ENCODE measurements at regions of chr3 and their contacts with region 1.

Region 1: DNA sequence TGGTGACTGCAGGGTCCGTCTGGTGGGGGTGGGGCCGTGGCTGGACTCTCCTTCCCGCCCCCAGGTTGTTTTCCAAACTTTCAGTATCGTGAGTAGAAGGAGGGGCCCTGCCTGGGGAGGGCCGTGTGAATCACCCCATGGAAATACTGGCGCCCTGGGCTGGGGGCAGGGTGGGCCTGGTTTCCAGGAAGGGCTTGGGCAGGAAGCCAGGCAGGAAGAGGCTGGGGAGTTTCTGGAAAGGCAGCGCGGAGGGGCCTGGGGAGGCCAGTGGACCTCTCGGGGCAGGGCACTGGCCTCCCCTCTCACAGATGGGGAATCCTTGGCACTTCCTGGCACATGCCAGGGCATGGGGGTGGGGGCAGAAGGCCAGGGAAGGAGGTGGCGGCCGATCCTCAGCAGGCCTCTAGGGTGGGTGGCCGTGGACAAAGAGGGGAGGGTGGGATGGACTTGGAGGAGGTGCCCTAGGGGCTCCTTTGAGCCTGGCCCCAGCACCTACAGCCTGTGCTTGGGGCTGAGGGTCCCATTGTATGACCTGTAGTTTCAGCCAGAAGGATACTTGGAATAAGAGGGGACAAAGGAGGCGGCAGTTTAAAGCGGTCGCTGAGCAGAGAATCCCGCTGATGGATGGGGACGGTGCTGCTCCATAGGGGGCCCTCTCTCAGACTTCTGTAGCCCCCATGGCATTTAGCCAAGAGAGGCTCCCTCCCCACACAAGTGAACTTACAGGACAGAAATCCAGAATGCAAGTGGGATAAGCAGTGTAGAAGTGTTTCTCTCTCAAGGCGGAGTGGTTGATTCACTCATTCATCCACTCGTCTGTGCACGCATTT is 56.5 kb upstream of the GATA2 start:
- DNase-seq: no peak
- ATAC-seq: peak; percentile 51

Region 2: GRCh38 chr3:127035677-127036076 is 1513.8 kb before region 1 on chr3:
- intact Hi-C with region 1: no loop called
- DNase-seq: peak; percentile 84
- ATAC-seq: peak; percentile 29

Region 3: DNA sequence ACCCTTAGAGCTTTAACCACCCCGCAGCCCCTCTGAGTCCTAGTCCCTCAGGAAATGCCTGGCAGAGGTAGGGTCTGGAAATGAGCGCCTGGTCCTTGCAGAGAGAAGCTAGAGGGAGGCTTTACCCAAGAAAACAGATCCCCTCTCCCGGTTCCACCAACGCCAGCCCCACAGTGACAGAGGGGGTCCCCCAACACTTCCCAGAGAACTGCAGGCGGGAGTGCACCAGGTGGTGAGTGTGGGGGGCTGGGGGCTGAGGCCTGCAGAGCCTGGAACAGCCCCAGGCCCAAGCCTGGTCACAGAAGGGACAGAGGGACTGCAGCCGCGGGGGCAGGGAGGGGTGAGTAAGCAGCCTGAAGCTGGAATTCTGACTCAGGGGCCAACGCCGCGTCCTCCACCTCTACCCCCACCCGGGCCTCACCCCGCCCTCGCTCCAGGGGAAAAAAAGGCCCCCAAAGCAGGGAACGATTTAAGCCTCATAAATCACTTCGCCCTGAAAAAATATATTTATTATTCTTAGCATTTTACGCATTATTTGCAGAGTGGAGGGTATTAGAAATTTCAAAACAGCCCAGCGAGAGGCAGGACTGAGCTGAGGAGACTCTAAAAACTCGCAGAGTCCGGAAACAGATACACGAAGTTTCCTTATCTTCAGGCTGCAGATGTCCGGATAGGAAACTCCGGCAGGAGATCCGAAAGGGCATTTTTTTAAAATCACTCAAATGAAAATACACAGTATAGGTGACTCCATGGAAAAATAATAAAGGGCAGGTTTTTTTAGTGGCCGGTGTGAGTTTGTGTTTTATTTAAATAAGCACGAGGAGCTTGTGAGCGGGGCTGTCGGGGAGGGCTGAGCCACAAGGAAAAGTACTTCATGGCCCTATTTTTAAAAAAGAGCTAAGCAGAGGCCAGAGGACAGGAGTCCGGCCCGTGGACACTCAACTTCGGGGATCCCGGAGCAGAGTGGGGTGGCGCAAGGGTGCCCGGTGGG is 66.5 kb before region 1 on chr3:
- intact Hi-C with region 1: loop called (anchors 1 kb)
- DNase-seq: no peak
- ATAC-seq: no peak

Measured in Right ventricle myocardium inferior (tissue), 1 donor.